B cell (primary cell): ENCODE measurements at regions of chr2 and their contacts with region 1.

Region 1: GRCh38 chr2:237966565-237967462 is at the start of gene UBE2F:
- DNase-seq: peak; percentile 97
- ATAC-seq: peak; percentile 94
- H3K4me3 ChIP-seq: peak within 1 kb of the TSS; percentile 54 to 96 (median 73)
- H3K4me3 Mint-ChIP-seq: peak within 1 kb of the TSS; percentile 81
- H3K27ac ChIP-seq: peak within 1 kb of the TSS; percentile 45 to 50
- H3K27ac Mint-ChIP-seq: peak within 1 kb of the TSS; percentile 88
- H3K4me1 ChIP-seq: peaks cover 27 to 32% of the 10 kb centered on the region in 2 donors
- H3K4me1 Mint-ChIP-seq: peaks cover 36% of the 10 kb centered on the region
- H3K27me3 ChIP-seq: no peaks in the 10 kb centered on the region
- H3K27me3 Mint-ChIP-seq: no peaks in the 10 kb centered on the region
- CTCF ChIP-seq: no peak
- total RNA-seq, gene UBE2F: 56.6 and 57.6 TPM in 2 replicates

Region 2: DNA sequence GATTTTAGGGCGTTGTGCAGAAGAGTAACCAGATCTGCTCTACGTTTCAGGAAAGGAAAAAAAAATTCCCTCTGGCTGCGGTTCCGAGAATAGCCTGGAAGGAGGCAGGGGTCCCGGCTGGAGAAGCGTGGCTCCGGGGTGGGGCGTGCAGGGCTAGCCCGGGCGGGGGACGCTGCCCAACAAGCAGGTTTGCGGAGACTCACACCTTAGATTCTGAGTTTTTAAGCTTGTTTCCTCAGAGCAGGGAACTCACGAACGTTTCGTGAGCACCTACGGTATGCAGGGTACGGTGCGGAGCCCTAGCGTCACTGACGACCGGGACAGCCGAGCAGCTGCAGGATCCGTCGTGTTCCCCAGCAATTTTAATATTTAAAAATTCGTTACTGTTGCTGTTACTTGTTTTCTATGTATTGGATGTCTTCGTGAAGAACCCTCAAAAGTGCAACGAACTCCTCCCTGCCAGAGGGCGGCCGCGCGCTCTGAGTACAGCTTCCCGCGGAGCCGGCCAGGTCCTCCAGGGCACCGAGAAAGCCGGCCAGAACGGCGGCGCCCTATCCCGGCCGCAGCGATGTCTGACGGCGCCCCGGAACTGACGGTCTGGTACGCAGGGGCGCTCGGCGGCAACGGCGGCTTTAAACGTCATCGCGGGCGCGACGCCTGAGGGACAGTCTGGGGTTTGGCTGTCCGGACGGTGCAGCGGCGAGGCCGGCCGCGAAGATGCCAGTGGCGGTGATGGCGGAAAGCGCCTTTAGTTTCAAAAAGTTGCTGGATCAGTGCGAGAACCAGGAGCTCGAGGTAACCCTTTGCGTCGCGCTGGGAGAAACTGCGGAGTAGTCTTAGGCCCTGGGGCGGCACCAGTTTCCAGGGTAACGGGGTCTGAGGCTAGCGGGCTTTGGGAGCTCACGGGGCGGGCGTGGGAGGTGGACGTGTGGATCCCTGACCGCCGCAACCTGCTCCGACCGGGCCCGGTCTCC is 881.3 kb before region 1 on chr2 and contains the start of gene COPS8:
- CTCF ChIA-PET with region 1: no interaction called
- POLR2A ChIA-PET with region 1: no interaction called
- intact Hi-C with region 1: loop called (anchors 10 kb)
- DNase-seq: peak; percentile 92
- ATAC-seq: peak; percentile 99
- H3K4me3 ChIP-seq: peak within 1 kb of the TSS; percentile 78 to 92 (median 84)
- H3K4me3 Mint-ChIP-seq: peak within 1 kb of the TSS; percentile 96
- H3K27ac ChIP-seq: peak within 1 kb of the TSS; percentile 59 to 90
- H3K27ac Mint-ChIP-seq: peak within 1 kb of the TSS; percentile 94
- H3K4me1 ChIP-seq: peaks cover 11 to 12% of the 10 kb centered on the region in 2 donors
- H3K4me1 Mint-ChIP-seq: peaks cover 16% of the 10 kb centered on the region
- H3K27me3 ChIP-seq: no peaks in the 10 kb centered on the region
- H3K27me3 Mint-ChIP-seq: no peaks in the 10 kb centered on the region
- CTCF ChIP-seq: peak; percentile 18
- total RNA-seq, gene COPS8: 32.7 and 34.2 TPM in 2 replicates

Region 3: DNA sequence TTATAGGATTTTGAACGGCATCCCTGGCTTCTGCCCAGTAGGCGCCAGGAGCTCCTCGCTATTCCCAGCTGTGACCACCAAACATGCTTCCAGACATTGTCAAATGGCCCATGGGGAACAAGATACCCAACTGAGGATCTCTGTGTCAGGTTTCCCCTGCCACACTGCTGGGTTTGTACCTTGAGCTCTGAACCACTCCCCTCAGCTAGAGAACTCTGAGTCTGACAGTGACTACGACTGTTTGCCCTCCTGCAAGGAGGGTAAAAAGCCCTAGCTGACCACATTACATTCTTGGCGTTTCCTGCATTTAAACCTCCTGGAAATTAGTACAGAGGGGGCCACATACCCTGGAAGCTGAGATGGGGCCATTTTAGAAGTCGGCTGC is 327.0 kb before region 1 on chr2:
- CTCF ChIA-PET with region 1: no interaction called
- POLR2A ChIA-PET with region 1: no interaction called
- intact Hi-C with region 1: no loop called
- DNase-seq: no peak
- ATAC-seq: no peak
- H3K4me3 ChIP-seq: no peak overlapping the region
- H3K4me3 Mint-ChIP-seq: no peak overlapping the region
- H3K27ac ChIP-seq: no peak overlapping the region
- H3K27ac Mint-ChIP-seq: no peak overlapping the region
- H3K4me1 ChIP-seq: no peaks in the 10 kb centered on the region
- H3K4me1 Mint-ChIP-seq: no peaks in the 10 kb centered on the region
- H3K27me3 ChIP-seq: peaks cover 0 to 2% (median 0%) of the 10 kb centered on the region in 4 experiments
- H3K27me3 Mint-ChIP-seq: peaks cover 27% of the 10 kb centered on the region
- CTCF ChIP-seq: no peak

Region 4: GRCh38 chr2:237898057-237898414 is 68.8 kb before region 1 on chr2:
- CTCF ChIA-PET with region 1: no interaction called
- POLR2A ChIA-PET with region 1: no interaction called
- intact Hi-C with region 1: loop called (anchors 2 kb)
- DNase-seq: no peak
- ATAC-seq: no peak
- H3K4me3 ChIP-seq: no peak overlapping the region
- H3K4me3 Mint-ChIP-seq: peak overlapping the region; percentile 75
- H3K27ac ChIP-seq: peak overlapping the region; percentile 17 to 54
- H3K27ac Mint-ChIP-seq: peak overlapping the region; percentile 89
- H3K4me1 ChIP-seq: peaks cover 10 to 18% of the 10 kb centered on the region in 2 donors
- H3K4me1 Mint-ChIP-seq: peaks cover 42% of the 10 kb centered on the region
- H3K27me3 ChIP-seq: no peaks in the 10 kb centered on the region
- H3K27me3 Mint-ChIP-seq: no peaks in the 10 kb centered on the region
- CTCF ChIP-seq: no peak

Region 5: DNA sequence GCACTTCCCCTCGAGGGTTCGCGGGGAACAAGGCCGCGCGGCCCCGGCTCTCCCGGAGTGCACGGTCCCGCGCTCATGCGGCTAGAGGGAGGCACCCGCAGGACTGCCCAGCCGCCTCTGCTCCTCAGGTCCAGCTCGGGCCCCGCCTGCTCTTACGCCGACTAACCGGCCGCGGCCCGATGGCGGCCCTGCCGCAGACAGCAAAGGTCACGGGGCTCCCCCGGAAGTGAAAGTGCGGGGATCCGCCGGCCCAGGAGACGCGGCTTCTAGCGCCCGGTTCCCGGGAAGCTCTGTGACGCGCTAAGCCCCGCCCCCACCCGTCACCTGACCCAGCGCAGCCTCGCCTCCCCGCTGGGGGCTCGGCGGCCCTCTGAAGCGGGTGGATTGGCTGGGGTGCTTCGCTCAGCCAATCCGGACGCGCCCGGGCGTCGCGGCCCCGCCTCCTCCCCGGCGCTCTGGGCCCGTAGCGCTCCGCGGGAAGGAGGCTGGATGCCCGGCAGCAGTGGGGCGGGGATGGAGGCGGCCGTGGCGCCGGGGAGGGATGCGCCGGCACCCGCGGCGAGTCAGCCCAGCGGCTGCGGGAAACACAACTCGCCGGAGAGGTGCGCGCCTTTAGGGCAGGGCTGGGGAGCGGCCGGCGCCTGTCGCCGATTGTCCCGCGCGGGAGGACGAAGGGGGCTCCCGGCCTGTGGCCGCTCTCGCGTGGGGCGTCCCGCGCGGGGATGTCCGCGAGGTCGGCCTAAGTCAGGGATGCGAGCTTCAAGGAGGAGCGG is 93.9 kb after region 1 on chr2 and contains the start of gene SCLY:
- CTCF ChIA-PET with region 1: no interaction called
- POLR2A ChIA-PET with region 1: no interaction called
- intact Hi-C with region 1: loop called (anchors 1 kb)
- DNase-seq: peak; percentile 98
- ATAC-seq: peak; percentile 97
- H3K4me3 ChIP-seq: peak within 1 kb of the TSS; percentile 66 to 95 (median 88)
- H3K4me3 Mint-ChIP-seq: peak within 1 kb of the TSS; percentile 87
- H3K27ac ChIP-seq: peak within 1 kb of the TSS; percentile 48 to 90
- H3K27ac Mint-ChIP-seq: peak within 1 kb of the TSS; percentile 87
- H3K4me1 ChIP-seq: peaks cover 15% of the 10 kb centered on the region in 2 donors
- H3K4me1 Mint-ChIP-seq: peaks cover 22% of the 10 kb centered on the region
- H3K27me3 ChIP-seq: no peaks in the 10 kb centered on the region
- H3K27me3 Mint-ChIP-seq: peaks cover 15% of the 10 kb centered on the region
- CTCF ChIP-seq: no peak
- total RNA-seq, gene SCLY: 36.6 and 42.4 TPM in 2 replicates

Region 6: GRCh38 chr2:238203094-238203972 is 236.5 kb after region 1 on chr2 and contains the start of gene ILKAP:
- CTCF ChIA-PET with region 1: no interaction called
- POLR2A ChIA-PET with region 1: no interaction called
- intact Hi-C with region 1: loop called (anchors 1 kb)
- DNase-seq: peak; percentile 93
- ATAC-seq: peak; percentile 97
- H3K4me3 ChIP-seq: peak within 1 kb of the TSS; percentile 46 to 72 (median 58)
- H3K4me3 Mint-ChIP-seq: peak within 1 kb of the TSS; percentile 86
- H3K27ac ChIP-seq: peak within 1 kb of the TSS; percentile 78 to 93
- H3K27ac Mint-ChIP-seq: peak within 1 kb of the TSS; percentile 91
- H3K4me1 ChIP-seq: peaks cover 23 to 31% of the 10 kb centered on the region in 2 donors
- H3K4me1 Mint-ChIP-seq: peaks cover 47% of the 10 kb centered on the region
- H3K27me3 ChIP-seq: peaks cover 0 to 8% (median 0%) of the 10 kb centered on the region in 4 experiments
- H3K27me3 Mint-ChIP-seq: no peaks in the 10 kb centered on the region
- CTCF ChIP-seq: no peak
- total RNA-seq, gene ILKAP: 98.6 and 102 TPM in 2 replicates

Region 7: DNA sequence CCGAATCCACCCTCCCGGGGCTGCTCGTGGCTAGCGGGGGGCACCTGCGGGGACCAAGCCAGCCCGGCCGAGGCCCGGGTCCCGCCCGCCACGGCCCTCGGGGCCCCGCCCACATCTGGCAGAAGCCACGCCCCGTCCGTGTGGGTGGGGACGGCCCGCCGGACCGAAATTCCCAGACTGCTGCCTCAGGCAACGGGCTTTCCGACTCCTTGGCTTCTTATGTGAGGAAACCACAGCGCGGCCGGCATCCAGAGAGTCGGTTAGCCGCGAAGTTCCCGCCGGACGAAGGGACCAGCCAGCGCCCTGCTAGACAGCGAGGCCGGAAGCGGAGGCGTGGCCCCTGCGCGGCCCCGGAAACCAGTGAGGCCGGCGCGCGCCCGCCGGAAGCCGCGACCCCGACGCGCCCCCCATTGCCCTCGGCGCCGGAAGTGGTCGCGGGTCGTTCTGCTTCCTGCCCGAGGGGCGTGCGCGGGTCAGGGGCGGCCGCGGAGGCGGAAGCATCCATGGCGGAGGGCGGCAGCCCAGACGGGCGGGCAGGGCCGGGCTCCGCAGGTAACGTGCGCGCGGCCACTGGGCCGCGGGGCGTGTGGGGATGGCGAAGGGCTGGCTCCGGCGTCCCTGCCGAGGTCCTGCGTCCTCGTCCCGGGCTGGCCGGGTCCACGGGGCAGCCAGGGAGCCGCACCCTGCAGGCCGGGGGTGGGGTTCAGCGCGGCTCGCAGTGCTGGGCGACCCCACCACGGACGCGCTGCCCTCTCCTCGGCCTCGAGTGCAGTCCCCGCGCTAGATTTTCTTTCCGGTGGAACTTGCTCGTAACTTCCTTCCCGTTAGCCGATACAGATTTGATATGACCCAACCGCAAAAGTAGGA is 460.0 kb after region 1 on chr2 and contains the start of gene ASB1:
- CTCF ChIA-PET with region 1: no interaction called
- POLR2A ChIA-PET with region 1: no interaction called
- intact Hi-C with region 1: loop called (anchors 2 kb)
- DNase-seq: peak; percentile 87
- ATAC-seq: peak; percentile 84
- H3K4me3 ChIP-seq: peak within 1 kb of the TSS; percentile 73 to 93 (median 81)
- H3K4me3 Mint-ChIP-seq: peak within 1 kb of the TSS; percentile 94
- H3K27ac ChIP-seq: peak within 1 kb of the TSS; percentile 81 to 92
- H3K27ac Mint-ChIP-seq: peak within 1 kb of the TSS; percentile 89
- H3K4me1 ChIP-seq: peaks cover 19 to 26% of the 10 kb centered on the region in 2 donors
- H3K4me1 Mint-ChIP-seq: peaks cover 43% of the 10 kb centered on the region
- H3K27me3 ChIP-seq: no peaks in the 10 kb centered on the region
- H3K27me3 Mint-ChIP-seq: no peaks in the 10 kb centered on the region
- CTCF ChIP-seq: no peak
- total RNA-seq, gene ASB1: 50.7 and 51.7 TPM in 2 replicates